Mammary epithelial cell (primary cell): ENCODE measurements at regions of chr7 and their contacts with region 1.

Region 1: DNA sequence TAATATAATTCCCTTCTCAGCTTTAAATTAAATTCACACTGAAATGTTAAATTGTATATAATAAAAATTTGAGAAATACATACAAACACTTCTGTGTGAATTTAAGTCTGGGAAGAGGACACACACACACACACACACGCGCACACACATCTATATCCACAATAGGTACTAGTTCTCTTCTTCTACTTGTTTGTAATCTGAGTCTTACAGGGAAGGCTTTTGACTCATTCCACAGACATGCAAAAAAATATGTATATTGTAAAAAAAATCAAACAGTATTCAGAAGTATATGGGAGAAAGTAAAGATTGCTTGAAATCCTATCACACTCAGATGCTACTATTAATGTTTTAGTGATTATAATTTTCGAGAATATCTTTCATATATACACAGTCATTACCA is 276.2 kb downstream of the MDFIC start:
- DNase-seq: no peak
- H3K4me3 ChIP-seq: no peak overlapping the region
- H3K27ac ChIP-seq: no peak overlapping the region
- H3K4me1 ChIP-seq: no peaks in the 10 kb centered on the region
- H3K27me3 ChIP-seq: no peaks in the 10 kb centered on the region
- CTCF ChIP-seq: no peak

Region 2: DNA sequence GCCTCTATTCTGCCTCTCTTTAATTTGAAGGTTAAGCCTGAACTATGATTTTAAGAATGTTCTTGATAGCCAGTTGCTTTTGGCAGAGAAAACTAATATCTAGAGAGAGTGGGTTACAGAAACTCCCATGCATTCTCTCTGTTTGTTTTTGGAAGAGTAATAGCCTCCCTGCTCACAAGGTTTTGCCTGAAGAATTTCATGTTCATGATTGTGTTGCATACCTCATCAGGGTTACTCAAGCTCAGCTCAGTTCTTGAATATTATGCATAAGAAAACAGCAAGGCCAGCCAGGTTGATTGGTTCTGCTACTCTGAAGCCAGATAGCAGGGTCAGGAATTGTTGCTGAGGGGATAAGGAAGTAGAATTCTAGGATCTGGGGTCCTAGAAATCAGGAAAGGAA is 138.8 kb before region 1 on chr7:
- CTCF ChIA-PET with region 1: no interaction called
- dilution Hi-C with region 1: no loop called
- in situ Hi-C with region 1: no loop called
- intact Hi-C with region 1: loop called (anchors 10 kb)
- DNase-seq: no peak
- H3K4me3 ChIP-seq: no peak overlapping the region
- H3K27ac ChIP-seq: no peak overlapping the region
- H3K4me1 ChIP-seq: no peaks in the 10 kb centered on the region
- H3K27me3 ChIP-seq: no peaks in the 10 kb centered on the region
- CTCF ChIP-seq: no peak